Activated B cell treated with CpG ODN at 0.5 μM for 24 hours (primary cell): ENCODE measurements at regions of chr1 and their contacts with region 1.

Region 1: DNA sequence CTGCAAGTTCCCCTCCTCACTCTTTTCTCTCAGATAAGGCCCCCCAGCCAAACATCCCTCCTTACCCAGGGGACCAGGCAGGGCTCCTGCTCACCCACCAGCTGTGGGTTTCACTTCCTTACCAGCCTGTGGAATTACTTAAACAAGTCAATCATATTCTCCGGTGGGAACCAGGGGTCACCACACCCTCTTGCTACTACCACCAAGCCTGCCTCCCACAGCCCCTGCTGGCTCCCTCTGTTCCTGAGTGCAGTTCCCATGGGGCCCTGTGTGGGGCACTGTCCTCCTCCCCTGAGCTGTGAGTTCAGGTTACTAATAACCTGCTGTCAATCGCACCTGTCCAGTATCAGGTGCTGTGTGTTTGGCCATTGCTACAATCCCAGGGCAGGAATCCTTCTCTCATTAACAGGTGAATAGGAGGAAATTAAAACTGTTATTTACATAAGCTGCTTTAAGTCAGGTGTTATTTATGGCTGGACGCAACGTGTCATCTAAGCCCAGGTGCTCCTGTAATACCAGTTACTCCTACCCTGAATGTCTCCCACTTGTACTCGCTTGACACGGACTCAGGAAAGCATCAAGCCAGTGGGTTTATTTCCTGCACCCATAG is 53.1 kb upstream of the LBR start:
- DNase-seq: peak; percentile 55
- ATAC-seq: peak; percentile 90
- H3K4me3 Mint-ChIP-seq: peak overlapping the region; percentile 30
- H3K27ac Mint-ChIP-seq: peak overlapping the region; percentile 56
- H3K4me1 Mint-ChIP-seq: peaks cover 57% of the 10 kb centered on the region
- H3K27me3 Mint-ChIP-seq: no peaks in the 10 kb centered on the region
- CTCF ChIP-seq: peak; percentile 16

Region 2: DNA sequence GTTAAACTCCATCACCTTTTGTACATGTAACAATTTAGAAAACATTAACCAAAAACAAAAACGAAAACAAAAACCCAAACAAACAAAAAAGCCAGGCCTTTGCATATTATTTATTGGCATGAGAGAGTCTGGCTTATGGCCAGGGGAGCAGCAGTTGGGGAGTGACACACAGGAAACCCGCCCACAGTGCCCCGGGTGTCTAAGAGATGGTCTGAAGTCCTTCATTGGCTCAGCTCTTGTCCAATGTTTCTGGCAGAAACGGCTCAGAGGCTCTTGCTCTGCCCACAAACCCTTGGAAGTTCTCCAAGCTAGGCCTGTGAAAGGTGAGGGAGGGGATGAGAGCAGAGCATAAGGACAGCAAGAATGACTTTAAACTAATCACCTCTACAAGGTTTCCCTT is 733.4 kb before region 1 on chr1:
- CTCF ChIA-PET with region 1: no interaction called
- POLR2A ChIA-PET with region 1: no interaction called
- intact Hi-C with region 1: no loop called
- DNase-seq: no peak
- ATAC-seq: no peak
- H3K4me3 Mint-ChIP-seq: no peak overlapping the region
- H3K27ac Mint-ChIP-seq: no peak overlapping the region
- H3K4me1 Mint-ChIP-seq: no peaks in the 10 kb centered on the region
- H3K27me3 Mint-ChIP-seq: no peaks in the 10 kb centered on the region
- CTCF ChIP-seq: no peak

Region 3: GRCh38 chr1:225467193-225468020 is 13.5 kb before region 1 on chr1:
- CTCF ChIA-PET with region 1: interaction called, 8 read pairs
- POLR2A ChIA-PET with region 1: interaction called, 44 read pairs
- intact Hi-C with region 1: no loop called
- DNase-seq: peak; percentile 75
- ATAC-seq: peak; percentile 86
- H3K4me3 Mint-ChIP-seq: peak overlapping the region; percentile 90
- H3K27ac Mint-ChIP-seq: peak overlapping the region; percentile 98
- H3K4me1 Mint-ChIP-seq: peaks cover 40% of the 10 kb centered on the region
- H3K27me3 Mint-ChIP-seq: no peaks in the 10 kb centered on the region
- CTCF ChIP-seq: no peak

Region 4: DNA sequence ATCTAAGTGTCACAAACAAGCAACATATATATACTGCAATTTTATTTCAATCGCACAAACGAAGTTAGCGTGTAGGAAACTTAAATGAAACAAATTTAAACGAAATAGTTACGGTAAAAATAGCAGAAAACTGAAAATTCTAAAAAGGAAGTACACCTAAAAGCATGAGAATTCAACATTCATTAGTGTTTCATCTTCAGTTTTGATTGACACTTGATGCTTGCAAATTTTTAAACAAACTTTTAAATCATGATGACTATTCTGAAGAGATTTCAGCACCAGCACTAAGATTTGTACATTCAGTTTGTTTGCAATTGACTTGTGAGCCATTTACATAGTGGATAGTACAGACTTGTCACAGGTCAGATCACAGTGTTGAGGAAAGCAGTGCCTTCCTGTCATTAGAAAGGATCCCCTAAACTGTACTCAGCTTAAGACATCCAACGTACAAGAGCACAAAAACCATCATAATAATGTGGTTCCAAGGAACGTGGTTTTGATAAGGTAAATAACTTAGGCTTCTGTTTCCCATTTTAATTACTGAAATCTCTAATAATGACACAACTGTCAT is 13.9 kb after region 1 on chr1:
- CTCF ChIA-PET with region 1: interaction called, 3 read pairs
- POLR2A ChIA-PET with region 1: no interaction called
- intact Hi-C with region 1: loop called (anchors 1 kb)
- DNase-seq: no peak
- ATAC-seq: no peak
- H3K4me3 Mint-ChIP-seq: no peak overlapping the region
- H3K27ac Mint-ChIP-seq: no peak overlapping the region
- H3K4me1 Mint-ChIP-seq: peaks cover 13% of the 10 kb centered on the region
- H3K27me3 Mint-ChIP-seq: peaks cover 6% of the 10 kb centered on the region
- CTCF ChIP-seq: no peak

Region 5: GRCh38 chr1:225772323-225772768 is 291.4 kb after region 1 on chr1:
- CTCF ChIA-PET with region 1: interaction called, 15 read pairs
- POLR2A ChIA-PET with region 1: no interaction called
- intact Hi-C with region 1: no loop called
- DNase-seq: no peak
- ATAC-seq: peak; percentile 59
- H3K4me3 Mint-ChIP-seq: no peak overlapping the region
- H3K27ac Mint-ChIP-seq: no peak overlapping the region
- H3K4me1 Mint-ChIP-seq: peaks cover 7% of the 10 kb centered on the region
- H3K27me3 Mint-ChIP-seq: no peaks in the 10 kb centered on the region
- CTCF ChIP-seq: no peak

Region 6: GRCh38 chr1:225794954-225795353 is 314.0 kb after region 1 on chr1:
- CTCF ChIA-PET with region 1: no interaction called
- POLR2A ChIA-PET with region 1: no interaction called
- intact Hi-C with region 1: no loop called
- DNase-seq: no peak
- ATAC-seq: no peak
- H3K4me3 Mint-ChIP-seq: no peak overlapping the region
- H3K27ac Mint-ChIP-seq: no peak overlapping the region
- H3K4me1 Mint-ChIP-seq: no peaks in the 10 kb centered on the region
- H3K27me3 Mint-ChIP-seq: no peaks in the 10 kb centered on the region
- CTCF ChIP-seq: no peak

Region 7: DNA sequence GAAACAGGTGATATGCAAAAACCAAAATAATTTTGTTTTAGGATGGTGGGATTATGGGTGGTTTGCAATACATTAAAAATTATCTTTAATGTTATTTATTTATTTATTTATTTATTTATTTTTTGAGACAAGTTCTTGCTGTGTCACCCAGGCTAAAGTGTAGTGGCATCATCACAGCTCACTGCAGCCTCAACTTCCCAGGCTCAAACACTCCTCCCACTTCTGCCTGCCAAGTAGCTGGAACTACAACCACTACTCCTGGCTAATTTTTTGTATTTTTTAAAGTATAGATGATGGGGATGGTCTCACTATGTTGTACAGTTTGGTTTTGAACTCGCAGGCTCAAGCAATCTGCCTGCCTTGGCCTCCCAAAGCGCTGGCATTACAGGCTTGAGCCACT is 449.6 kb after region 1 on chr1:
- CTCF ChIA-PET with region 1: no interaction called
- POLR2A ChIA-PET with region 1: interaction called, 10 read pairs
- intact Hi-C with region 1: no loop called
- DNase-seq: no peak
- ATAC-seq: no peak
- H3K4me3 Mint-ChIP-seq: no peak overlapping the region
- H3K27ac Mint-ChIP-seq: no peak overlapping the region
- H3K4me1 Mint-ChIP-seq: no peaks in the 10 kb centered on the region
- H3K27me3 Mint-ChIP-seq: no peaks in the 10 kb centered on the region
- CTCF ChIP-seq: no peak